Mucosa of descending colon (tissue), 3 donors: ENCODE measurements at regions of chr11 and their contacts with region 1.

Region 1: GRCh38 chr11:26753723-26754504 is 32.1 kb upstream of the SLC5A12 start:
- DNase-seq: peak in 1 of 3 donors; percentile 70
- ATAC-seq: peak; percentile 67
- H3K4me3 ChIP-seq: no peak overlapping the region
- H3K4me1 ChIP-seq: peaks cover 6% of the 10 kb centered on the region
- CTCF ChIP-seq: peak; percentile 21

Region 2: DNA sequence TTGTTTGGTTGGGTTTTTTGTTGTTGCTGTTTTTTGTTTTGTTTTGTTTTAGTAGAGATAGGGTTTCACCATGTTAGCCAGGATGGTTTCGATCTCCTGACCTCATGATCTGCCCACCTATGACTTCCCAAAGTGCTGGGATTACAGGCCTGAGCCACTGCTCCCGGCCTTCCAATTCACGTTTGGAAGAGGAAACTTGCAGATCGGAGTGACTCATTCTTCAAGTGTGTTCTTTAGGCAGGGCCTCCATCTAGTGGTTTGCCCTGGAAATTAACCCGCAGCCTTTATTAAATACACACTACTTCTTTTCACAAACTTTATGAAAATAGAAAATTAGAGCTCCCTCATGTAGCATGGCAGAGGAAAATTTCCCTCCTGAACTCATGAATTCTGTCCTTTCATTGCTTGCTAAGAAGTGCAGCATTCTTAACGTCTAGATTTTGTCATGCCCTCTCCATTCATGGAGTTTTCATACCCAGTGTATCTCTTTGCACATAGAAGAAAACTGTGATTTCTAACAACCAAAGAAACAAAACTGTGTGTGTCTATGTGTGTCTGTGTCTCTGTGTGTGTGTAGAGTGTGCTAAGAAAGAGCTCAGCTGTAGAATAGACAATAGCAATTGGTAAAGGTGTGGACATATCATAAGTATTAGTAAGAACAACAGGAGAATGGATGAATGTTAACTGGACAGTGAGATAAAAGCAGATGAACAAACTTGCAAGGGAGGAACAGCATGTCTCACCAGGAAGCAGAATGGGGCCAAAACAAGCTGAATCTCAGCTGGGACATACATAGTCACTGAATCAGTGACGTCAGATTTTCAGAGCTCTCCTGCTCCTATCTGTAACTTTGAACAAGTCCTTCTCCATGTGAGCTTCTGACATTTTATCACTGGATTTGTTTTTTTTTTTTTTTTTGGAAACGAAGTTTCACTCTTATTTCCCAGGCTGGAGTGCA is 405.1 kb after region 1 on chr11:
- intact Hi-C with region 1: loop called (anchors 5 to 10 kb)
- DNase-seq: peak in 1 of 3 donors; percentile 72
- ATAC-seq: peak; percentile 83
- H3K4me3 ChIP-seq: no peak overlapping the region
- H3K4me1 ChIP-seq: peaks cover 3% of the 10 kb centered on the region
- CTCF ChIP-seq: peak; percentile 52

Region 3: GRCh38 chr11:27506200-27507182 is 752.6 kb after region 1 on chr11 and contains the start of gene LIN7C:
- intact Hi-C with region 1: loop called in 1 of 2 experiments (anchors 10 kb)
- DNase-seq: peak; percentile 96 to 99 (median 97)
- ATAC-seq: peak; percentile 100
- H3K4me3 ChIP-seq: peak within 1 kb of the TSS; percentile 86
- H3K4me1 ChIP-seq: peaks cover 11% of the 10 kb centered on the region
- CTCF ChIP-seq: peak; percentile 6
- total RNA-seq, gene LIN7C: 37.8 to 41.2 (median 40.5) TPM